ENCODE measurements at regions of chr3 and their contacts with region 1.

Region 1: GRCh38 chr3:30112902-30113484 is 493.4 kb upstream of the TGFBR2 start:
- DNase-seq: no peak
- H3K4me3 Mint-ChIP-seq: no peak overlapping the region
- H3K27ac Mint-ChIP-seq: no peak overlapping the region
- H3K4me1 Mint-ChIP-seq: peaks cover 8% of the 10 kb centered on the region
- H3K27me3 Mint-ChIP-seq: no peaks in the 10 kb centered on the region
- CTCF ChIP-seq: no peak

Region 2: DNA sequence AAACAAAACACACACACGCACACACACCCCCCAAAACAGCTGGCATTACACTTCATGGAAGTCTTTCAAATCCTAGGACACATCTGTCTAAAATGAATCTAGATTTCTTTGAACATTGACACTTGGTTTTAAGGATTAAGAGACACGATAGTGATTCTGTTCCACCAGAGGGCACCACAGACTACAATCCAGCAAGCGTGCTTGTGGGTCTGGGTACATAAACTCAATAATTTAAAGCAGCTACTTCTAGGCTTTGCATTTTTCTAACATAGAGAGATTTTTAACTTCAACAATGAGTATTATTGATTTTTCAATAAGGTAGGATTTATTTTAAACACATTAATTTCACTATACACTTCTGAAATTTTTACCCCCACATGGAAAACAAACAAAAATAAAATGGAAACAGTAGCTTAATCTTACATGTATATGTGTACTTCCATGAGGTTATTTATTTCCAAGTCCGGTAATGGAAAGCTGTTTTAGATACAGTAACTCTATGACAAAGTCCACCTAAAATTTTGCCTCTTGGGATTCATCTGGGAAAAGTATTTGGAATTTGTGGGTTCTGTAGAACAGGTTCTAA is 70.6 kb before region 1 on chr3:
- CTCF ChIA-PET with region 1: no interaction called
- intact Hi-C with region 1: loop called (anchors 2 kb)
- DNase-seq: peak; percentile 71
- H3K4me3 Mint-ChIP-seq: no peak overlapping the region
- H3K27ac Mint-ChIP-seq: no peak overlapping the region
- H3K4me1 Mint-ChIP-seq: no peaks in the 10 kb centered on the region
- H3K27me3 Mint-ChIP-seq: no peaks in the 10 kb centered on the region
- CTCF ChIP-seq: peak; percentile 23

Region 3: GRCh38 chr3:30199096-30199759 is 86.2 kb after region 1 on chr3:
- CTCF ChIA-PET with region 1: interaction called, 4 read pairs
- intact Hi-C with region 1: loop called (anchors 1 kb)
- DNase-seq: peak; percentile 58
- H3K4me3 Mint-ChIP-seq: no peak overlapping the region
- H3K27ac Mint-ChIP-seq: no peak overlapping the region
- H3K4me1 Mint-ChIP-seq: no peaks in the 10 kb centered on the region
- H3K27me3 Mint-ChIP-seq: no peaks in the 10 kb centered on the region
- CTCF ChIP-seq: peak; percentile 68

Region 4: DNA sequence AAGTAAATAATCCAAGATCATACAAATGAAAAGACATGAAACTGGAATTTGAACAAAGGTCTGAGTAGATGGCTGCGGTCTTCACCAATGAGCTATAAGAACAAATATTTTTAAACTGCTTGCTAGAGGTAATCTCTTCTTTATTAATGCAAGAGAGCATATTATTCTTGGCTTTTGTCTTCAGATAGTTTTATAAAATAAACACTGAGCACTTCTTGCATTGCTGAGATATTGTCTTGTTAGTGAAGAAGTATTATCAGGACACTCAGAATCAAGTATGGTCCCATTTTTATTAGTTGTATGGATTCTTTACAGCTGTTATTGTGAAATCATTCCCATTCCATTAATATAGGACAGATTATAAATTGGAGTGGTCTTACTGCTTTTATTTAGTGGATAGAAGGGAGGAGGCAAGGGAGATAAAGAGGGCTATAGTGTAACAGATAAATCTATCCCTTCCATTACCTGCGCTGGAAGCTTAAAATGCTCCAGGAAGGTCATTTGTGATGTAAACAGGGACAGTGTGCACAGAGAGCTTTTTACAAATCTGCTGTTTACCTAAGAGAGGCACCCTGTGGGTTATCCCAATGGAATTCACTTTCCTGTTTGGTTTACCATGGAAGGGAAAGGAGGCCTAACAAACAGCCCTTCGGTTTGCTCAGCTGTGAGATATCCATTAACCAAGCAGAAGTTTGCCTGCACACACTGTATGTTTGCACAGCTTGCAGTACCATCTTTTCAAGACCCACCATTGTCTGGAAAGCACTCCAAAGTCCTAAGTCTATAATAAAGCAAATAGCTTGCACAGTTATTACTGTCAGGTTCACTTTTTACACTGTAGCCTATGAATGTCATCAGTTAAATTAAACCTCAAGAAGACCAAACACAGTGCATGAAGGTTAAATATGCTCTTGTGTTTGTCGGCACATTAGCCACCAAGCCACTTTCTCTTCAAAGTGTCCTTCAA is 145.7 kb after region 1 on chr3:
- CTCF ChIA-PET with region 1: no interaction called
- intact Hi-C with region 1: no loop called
- DNase-seq: no peak
- H3K4me3 Mint-ChIP-seq: no peak overlapping the region
- H3K27ac Mint-ChIP-seq: no peak overlapping the region
- H3K4me1 Mint-ChIP-seq: peaks cover 9% of the 10 kb centered on the region
- H3K27me3 Mint-ChIP-seq: no peaks in the 10 kb centered on the region
- CTCF ChIP-seq: no peak

Region 5: DNA sequence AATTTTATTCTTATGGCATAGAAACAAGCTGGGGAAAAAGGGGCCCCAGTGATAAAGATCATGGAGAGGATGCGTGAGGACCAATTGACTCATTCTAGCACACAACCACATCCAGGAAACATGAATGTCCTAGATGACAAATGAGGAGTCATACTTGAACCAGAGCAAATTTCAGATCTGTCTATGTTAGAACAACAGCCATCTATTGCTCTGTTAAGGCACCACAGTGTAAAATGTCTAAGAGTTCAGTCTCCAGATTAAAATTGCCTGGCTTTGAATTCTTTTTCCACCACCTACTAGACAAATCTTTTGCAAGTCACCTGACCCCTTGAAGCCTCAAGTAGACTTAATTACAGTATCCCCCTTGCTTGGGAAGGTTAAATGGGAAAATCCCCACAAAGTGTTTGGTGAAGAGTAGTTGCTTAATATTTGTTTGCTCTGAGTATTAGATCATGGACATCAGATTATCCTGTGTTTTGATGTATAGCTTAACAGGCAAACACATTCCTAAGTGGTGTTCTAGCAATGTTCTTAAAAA is 234.8 kb after region 1 on chr3:
- CTCF ChIA-PET with region 1: no interaction called
- intact Hi-C with region 1: loop called (anchors 10 kb)
- DNase-seq: no peak
- H3K4me3 Mint-ChIP-seq: no peak overlapping the region
- H3K27ac Mint-ChIP-seq: no peak overlapping the region
- H3K4me1 Mint-ChIP-seq: peaks cover 50% of the 10 kb centered on the region
- H3K27me3 Mint-ChIP-seq: no peaks in the 10 kb centered on the region
- CTCF ChIP-seq: no peak

Region 6: GRCh38 chr3:30496066-30496966 is 383.3 kb after region 1 on chr3:
- CTCF ChIA-PET with region 1: no interaction called
- intact Hi-C with region 1: loop called (anchors 10 kb)
- DNase-seq: no peak
- H3K4me3 Mint-ChIP-seq: no peak overlapping the region
- H3K27ac Mint-ChIP-seq: no peak overlapping the region
- H3K4me1 Mint-ChIP-seq: peaks cover 53% of the 10 kb centered on the region
- H3K27me3 Mint-ChIP-seq: no peaks in the 10 kb centered on the region
- CTCF ChIP-seq: no peak

Region 7: DNA sequence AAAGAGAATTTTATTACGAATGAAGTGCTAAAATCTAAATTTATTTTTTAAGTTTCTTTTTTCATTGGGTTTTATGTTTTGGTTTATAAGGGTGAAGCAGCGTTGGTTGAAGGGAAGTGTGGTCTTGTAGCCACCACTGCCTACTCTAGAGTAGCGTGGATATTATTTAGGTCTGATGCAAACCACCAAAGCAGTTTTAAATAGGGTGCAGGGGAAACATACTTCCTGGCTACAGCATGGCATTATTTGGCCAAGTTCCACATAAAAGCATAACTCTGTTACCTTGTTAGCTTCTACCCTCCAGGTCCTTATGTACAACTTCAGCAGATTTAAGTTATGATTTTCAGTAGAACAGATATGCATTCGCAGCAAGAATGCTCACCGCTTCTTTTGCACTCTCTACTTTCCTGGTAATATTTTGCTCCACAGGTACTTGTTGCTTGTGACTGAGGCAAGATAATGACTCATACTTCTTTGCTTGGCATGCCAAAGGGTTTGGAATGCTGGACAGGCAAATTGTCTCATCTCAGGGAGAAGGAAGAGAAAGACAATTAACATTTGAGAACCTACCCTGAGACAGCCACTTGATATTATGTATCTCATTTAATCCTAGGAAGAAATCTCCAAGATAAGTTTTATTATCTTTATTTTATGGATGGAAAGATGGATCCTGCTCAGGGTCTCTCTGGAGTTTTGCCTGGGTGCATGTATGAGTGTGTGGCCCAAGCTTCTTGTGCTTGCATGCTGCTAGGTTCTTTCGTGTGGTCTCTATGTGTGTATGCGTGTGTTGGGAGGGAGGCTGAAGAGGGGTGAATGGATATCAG is 498.8 kb after region 1 on chr3:
- CTCF ChIA-PET with region 1: no interaction called
- intact Hi-C with region 1: loop called (anchors 10 kb)
- DNase-seq: no peak
- H3K4me3 Mint-ChIP-seq: peak overlapping the region; percentile 66
- H3K27ac Mint-ChIP-seq: peak overlapping the region; percentile 67
- H3K4me1 Mint-ChIP-seq: peaks cover 68% of the 10 kb centered on the region
- H3K27me3 Mint-ChIP-seq: no peaks in the 10 kb centered on the region
- CTCF ChIP-seq: no peak

Region 8: GRCh38 chr3:30751610-30752299 is 638.8 kb after region 1 on chr3:
- CTCF ChIA-PET with region 1: no interaction called
- intact Hi-C with region 1: loop called (anchors 1 kb)
- DNase-seq: peak; percentile 27
- H3K4me3 Mint-ChIP-seq: no peak overlapping the region
- H3K27ac Mint-ChIP-seq: no peak overlapping the region
- H3K4me1 Mint-ChIP-seq: peaks cover 38% of the 10 kb centered on the region
- H3K27me3 Mint-ChIP-seq: no peaks in the 10 kb centered on the region
- CTCF ChIP-seq: no peak

Measured in Calu3 (cell line).